PC-9 (cell line): ENCODE measurements at regions of chr4 and their contacts with region 1.

Region 1: GRCh38 chr4:18689308-18690115 is 668.0 kb upstream of the LCORL start:
- DNase-seq: peak in 1 of 2 experiments; percentile 44
- H3K4me3 ChIP-seq: no peak overlapping the region
- H3K27ac ChIP-seq: no peak overlapping the region
- H3K4me1 ChIP-seq: no peaks in the 10 kb centered on the region
- H3K27me3 ChIP-seq: no peaks in the 10 kb centered on the region
- CTCF ChIP-seq: peak; percentile 85

Region 2: DNA sequence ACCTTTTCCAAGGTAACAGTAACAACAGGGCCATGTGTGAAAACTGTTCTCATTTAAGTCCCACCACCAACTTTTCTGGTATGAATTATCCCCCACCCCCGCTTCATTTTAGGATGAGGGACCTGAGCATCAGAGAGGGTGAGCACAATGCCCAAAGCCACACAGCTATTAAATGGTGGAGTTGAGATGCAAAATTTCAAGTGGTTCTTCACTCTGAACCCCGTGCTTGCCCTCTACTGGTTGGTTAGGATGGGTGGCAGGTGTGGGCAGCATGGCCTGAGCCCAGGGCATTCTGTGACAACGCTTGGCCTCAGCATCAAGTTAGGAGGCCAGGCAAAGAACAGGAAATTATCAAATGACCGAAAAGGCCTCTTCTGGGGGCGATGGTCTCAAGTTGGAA is 1041.6 kb before region 1 on chr4:
- CTCF ChIA-PET with region 1: interaction called, 17 read pairs
- POLR2A ChIA-PET with region 1: no interaction called
- intact Hi-C with region 1: no loop called
- DNase-seq: no peak
- H3K4me3 ChIP-seq: no peak overlapping the region
- H3K27ac ChIP-seq: no peak overlapping the region
- H3K4me1 ChIP-seq: no peaks in the 10 kb centered on the region
- H3K27me3 ChIP-seq: no peaks in the 10 kb centered on the region
- CTCF ChIP-seq: no peak

Region 3: DNA sequence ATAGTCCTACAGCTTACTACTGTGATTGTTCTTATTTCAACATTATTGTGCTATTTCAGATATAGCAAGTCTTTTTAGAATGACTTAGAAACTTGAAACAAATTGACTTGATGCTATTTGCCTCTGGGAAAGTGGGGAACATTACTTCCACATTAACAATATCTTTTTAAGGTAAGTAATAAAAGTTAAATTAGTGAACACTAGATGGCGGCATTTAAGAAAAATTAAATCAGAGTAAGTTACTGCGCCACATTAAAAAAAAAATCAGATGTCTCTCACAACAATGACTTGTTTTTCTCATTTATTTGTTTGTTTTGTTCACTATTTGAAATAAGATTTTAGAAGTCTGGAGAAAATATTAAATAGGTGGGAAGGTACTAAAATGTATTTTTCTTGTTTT is 535.3 kb after region 1 on chr4:
- CTCF ChIA-PET with region 1: no interaction called
- POLR2A ChIA-PET with region 1: no interaction called
- intact Hi-C with region 1: loop called (anchors 10 kb)
- DNase-seq: peak in 1 of 2 experiments; percentile 35
- H3K4me3 ChIP-seq: no peak overlapping the region
- H3K27ac ChIP-seq: no peak overlapping the region
- H3K4me1 ChIP-seq: no peaks in the 10 kb centered on the region
- H3K27me3 ChIP-seq: no peaks in the 10 kb centered on the region
- CTCF ChIP-seq: peak; percentile 52

Region 4: GRCh38 chr4:19358015-19358414 is 668.5 kb after region 1 on chr4:
- CTCF ChIA-PET with region 1: no interaction called
- POLR2A ChIA-PET with region 1: no interaction called
- intact Hi-C with region 1: no loop called
- DNase-seq: no peak
- H3K4me3 ChIP-seq: no peak overlapping the region
- H3K27ac ChIP-seq: no peak overlapping the region
- H3K4me1 ChIP-seq: no peaks in the 10 kb centered on the region
- H3K27me3 ChIP-seq: no peaks in the 10 kb centered on the region
- CTCF ChIP-seq: no peak

Region 5: DNA sequence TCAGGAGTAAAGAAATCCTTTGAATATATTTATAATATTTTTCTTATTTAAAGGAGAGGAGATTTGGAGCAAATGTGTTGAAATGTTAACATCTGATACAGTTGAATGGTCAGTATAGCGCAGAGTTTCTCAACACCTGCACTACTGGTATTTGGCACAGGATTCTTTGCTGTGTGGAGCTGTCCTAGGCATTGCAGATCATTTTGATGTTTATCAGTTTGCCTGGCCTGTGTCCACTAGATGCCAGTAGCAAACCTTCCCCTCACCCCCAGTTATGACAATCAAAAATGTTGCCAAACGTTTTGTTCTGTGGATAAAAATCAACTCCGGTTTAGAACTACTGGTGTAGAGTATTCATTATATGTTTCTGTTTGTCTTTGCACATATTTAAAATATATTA is 796.9 kb after region 1 on chr4:
- CTCF ChIA-PET with region 1: no interaction called
- POLR2A ChIA-PET with region 1: no interaction called
- intact Hi-C with region 1: loop called (anchors 5 kb)
- DNase-seq: peak; percentile 35 to 44
- H3K4me3 ChIP-seq: no peak overlapping the region
- H3K27ac ChIP-seq: no peak overlapping the region
- H3K4me1 ChIP-seq: no peaks in the 10 kb centered on the region
- H3K27me3 ChIP-seq: no peaks in the 10 kb centered on the region
- CTCF ChIP-seq: no peak

Region 6: GRCh38 chr4:20422398-20422797 is 1732.9 kb after region 1 on chr4:
- CTCF ChIA-PET with region 1: no interaction called
- POLR2A ChIA-PET with region 1: no interaction called
- intact Hi-C with region 1: loop called (anchors 5 kb)
- DNase-seq: peak in 1 of 2 experiments; percentile 56
- H3K4me3 ChIP-seq: no peak overlapping the region
- H3K27ac ChIP-seq: no peak overlapping the region
- H3K4me1 ChIP-seq: no peaks in the 10 kb centered on the region
- H3K27me3 ChIP-seq: no peaks in the 10 kb centered on the region
- CTCF ChIP-seq: peak; percentile 46

Region 7: GRCh38 chr4:20544645-20545044 is 1855.1 kb after region 1 on chr4:
- CTCF ChIA-PET with region 1: no interaction called
- POLR2A ChIA-PET with region 1: no interaction called
- intact Hi-C with region 1: loop called (anchors 5 kb)
- DNase-seq: no peak
- H3K4me3 ChIP-seq: no peak overlapping the region
- H3K27ac ChIP-seq: no peak overlapping the region
- H3K4me1 ChIP-seq: no peaks in the 10 kb centered on the region
- H3K27me3 ChIP-seq: no peaks in the 10 kb centered on the region
- CTCF ChIP-seq: peak; percentile 56

Region 8: GRCh38 chr4:20684852-20685763 is 1995.6 kb after region 1 on chr4:
- CTCF ChIA-PET with region 1: no interaction called
- POLR2A ChIA-PET with region 1: no interaction called
- intact Hi-C with region 1: loop called (anchors 2 kb)
- DNase-seq: no peak
- H3K4me3 ChIP-seq: no peak overlapping the region
- H3K27ac ChIP-seq: no peak overlapping the region
- H3K4me1 ChIP-seq: no peaks in the 10 kb centered on the region
- H3K27me3 ChIP-seq: no peaks in the 10 kb centered on the region
- CTCF ChIP-seq: peak; percentile 70